ENCODE measurements at regions of chr12 and their contacts with region 1.

Region 1: DNA sequence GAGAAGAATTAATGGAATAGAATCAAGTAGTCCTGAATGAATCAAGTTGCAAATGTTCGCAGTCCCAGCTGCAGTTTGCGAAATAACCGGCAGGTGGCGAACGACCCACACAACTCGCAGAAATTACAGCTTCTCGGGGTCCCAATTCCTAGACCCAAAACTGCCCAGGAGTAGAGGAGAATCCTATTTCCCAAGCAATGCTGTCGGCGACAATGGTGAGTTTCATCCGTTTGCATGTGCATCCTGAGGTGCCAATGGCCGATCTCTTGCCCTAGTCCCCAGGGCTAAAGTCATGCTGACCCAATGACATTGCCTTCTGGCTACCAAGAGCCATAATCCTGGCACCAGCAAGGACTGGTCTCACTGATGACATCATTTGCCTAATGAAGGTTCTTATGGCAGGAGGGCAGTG is 8.5 kb upstream of the ASCL1 start:
- DNase-seq: peak in 1 of 5 donors; percentile 26
- ATAC-seq: no peak
- H3K4me3 ChIP-seq: no peak overlapping the region
- H3K27ac ChIP-seq: no peak overlapping the region
- H3K4me1 ChIP-seq: peaks cover 0 to 4% (median 0%) of the 10 kb centered on the region in 12 donors
- H3K27me3 ChIP-seq: peaks cover 3 to 62% (median 31%) of the 10 kb centered on the region in 9 donors
- CTCF ChIP-seq: peak; percentile 61 to 87 (median 72)
- POLR2A ChIP-seq: no peak

Region 2: DNA sequence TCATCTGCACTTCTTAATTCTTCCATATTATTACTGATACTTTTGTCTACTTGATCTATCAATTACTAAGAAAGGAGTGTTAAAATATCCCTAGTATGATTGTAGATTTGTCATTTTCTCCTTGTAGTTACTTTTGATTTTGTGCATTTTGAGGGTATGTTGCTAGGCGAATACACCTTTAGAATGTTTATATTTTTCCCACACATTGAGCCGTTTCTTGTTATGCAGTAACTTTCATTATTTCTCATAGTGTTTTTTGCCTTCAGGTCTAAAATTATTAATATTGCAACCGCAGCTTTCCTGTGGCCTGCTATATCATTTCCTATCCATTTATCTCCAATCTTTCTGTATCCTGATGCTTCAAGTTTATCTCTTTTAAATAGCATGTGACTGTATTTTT is 591.4 kb after region 1 on chr12:
- intact Hi-C with region 1: loop called in 2 of 10 experiments (anchors 5 kb)
- DNase-seq: no peak
- ATAC-seq: no peak
- H3K4me3 ChIP-seq: no peak overlapping the region
- H3K27ac ChIP-seq: no peak overlapping the region
- H3K4me1 ChIP-seq: no peaks in the 10 kb centered on the region
- H3K27me3 ChIP-seq: peaks cover 0 to 3% (median 0%) of the 10 kb centered on the region in 9 donors
- CTCF ChIP-seq: no peak
- POLR2A ChIP-seq: no peak

Region 3: GRCh38 chr12:103548622-103549601 is 600.0 kb after region 1 on chr12:
- intact Hi-C with region 1: loop called (anchors 1 to 5 kb)
- DNase-seq: peak in 4 of 5 donors; percentile 35 to 55 (median 37)
- ATAC-seq: peak in 2 of 4 donors; percentile 50 to 59
- H3K4me3 ChIP-seq: no peak overlapping the region
- H3K27ac ChIP-seq: no peak overlapping the region
- H3K4me1 ChIP-seq: no peaks in the 10 kb centered on the region
- H3K27me3 ChIP-seq: peaks cover 0 to 30% (median 0%) of the 10 kb centered on the region in 9 donors
- CTCF ChIP-seq: peak; percentile 51 to 82 (median 75)
- POLR2A ChIP-seq: no peak